WTC11 (cell line): ENCODE measurements at regions of chr1 and their contacts with region 1.

Region 1: DNA sequence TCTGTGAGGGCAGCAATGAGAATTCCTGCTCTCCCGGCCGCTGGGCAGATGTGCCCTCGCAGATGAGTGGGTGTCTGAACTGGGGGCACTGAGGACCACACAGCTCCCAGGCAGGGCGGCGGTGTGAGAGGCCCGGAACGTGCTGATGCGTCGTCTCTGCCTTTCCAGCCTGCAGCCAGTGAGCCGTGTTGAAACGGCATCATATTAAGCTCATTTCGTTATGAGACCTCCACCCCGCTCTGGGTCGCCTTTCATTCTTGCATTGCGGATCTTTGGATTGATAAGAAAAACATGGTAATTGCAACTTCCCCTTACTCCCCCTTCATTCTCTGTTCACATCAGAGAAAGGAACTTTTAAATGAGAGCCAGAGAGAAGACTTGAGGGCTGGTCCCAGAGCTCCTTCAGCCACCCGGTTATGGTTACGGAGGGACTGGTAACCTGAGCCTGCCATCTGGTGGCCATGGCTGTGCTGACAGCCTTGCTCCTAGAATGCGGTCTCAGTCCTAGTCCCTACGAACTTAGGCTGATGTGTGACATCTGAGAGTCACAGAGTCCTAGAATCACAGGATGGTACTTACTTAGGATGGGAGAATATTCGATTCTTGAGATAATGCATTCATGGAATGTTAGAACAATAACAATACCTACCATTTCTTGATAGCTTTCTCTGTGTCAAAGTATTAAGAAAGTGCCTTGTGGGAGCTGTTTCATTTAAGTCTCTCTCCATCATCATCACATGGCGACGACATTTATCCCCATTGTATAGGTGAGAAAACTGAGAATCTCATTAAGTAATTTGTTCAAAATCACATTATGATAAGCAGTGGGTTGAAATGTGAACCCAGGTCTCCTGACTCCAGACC is 271.0 kb downstream of the TRABD2B start:
- DNase-seq: peak; percentile 85
- ATAC-seq: peak; percentile 80
- H3K4me3 Mint-ChIP-seq: peak overlapping the region; percentile 39
- H3K27ac Mint-ChIP-seq: no peak overlapping the region
- H3K4me1 Mint-ChIP-seq: peaks cover 15% of the 10 kb centered on the region
- H3K27me3 Mint-ChIP-seq: peaks cover 71% of the 10 kb centered on the region
- CTCF ChIP-seq: peak; percentile 74

Region 2: DNA sequence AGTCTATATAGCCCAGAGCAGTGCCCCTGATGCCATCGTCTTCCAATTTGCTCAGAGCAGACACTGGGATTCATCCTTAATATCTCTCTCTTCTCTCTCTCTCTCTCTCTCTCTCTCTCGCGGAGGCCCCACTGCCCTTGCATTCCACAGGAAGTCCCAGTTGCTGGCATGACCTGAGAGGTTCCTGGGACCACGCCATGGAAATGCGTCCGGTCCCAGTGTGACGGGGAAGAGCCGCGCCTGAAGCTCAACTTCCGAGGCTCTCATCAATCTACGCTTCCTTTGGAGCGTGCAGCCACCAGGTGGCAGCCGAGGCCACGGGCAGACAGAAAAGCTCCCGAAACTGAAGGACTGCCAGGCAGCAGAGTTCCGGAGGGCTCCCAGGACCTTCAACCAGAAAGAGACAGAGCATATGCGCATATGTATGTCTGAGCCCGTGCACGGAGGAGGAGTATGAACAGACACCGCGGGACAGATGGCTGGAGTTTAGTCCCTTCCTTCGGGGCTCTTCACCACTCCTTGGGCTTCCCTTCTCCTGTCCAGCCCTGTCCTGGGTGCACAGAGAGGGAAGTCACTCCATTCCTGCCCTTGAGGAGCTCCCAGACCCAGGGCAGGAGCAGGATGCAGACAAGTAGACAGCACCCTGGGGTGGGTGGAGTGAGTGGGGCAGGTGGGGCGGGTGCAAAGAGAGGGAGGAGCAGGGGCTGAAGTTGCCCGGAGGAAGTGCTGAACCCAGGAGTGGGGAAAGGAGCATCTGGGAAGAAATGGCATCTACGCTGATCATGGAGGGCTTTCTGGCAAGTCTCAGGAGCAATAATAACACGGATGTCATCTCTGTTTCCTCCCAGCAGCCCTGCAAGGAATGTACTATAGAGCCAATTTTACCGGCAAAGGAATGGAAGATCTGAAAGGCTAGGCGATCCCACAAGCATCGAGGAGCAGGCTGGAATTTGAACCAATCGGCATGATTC is 546.9 kb before region 1 on chr1:
- CTCF ChIA-PET with region 1: interaction called, 10 read pairs
- POLR2A ChIA-PET with region 1: no interaction called
- DNase-seq: peak; percentile 94
- ATAC-seq: peak; percentile 81
- H3K4me3 Mint-ChIP-seq: peak overlapping the region; percentile 79
- H3K27ac Mint-ChIP-seq: peak overlapping the region; percentile 76
- H3K4me1 Mint-ChIP-seq: peaks cover 22% of the 10 kb centered on the region
- H3K27me3 Mint-ChIP-seq: peaks cover 36% of the 10 kb centered on the region
- CTCF ChIP-seq: peak; percentile 62

Region 3: GRCh38 chr1:47432071-47433036 is 293.9 kb before region 1 on chr1:
- CTCF ChIA-PET with region 1: interaction called, 133 read pairs
- POLR2A ChIA-PET with region 1: no interaction called
- DNase-seq: peak; percentile 90
- ATAC-seq: peak; percentile 70
- H3K4me3 Mint-ChIP-seq: peak overlapping the region; percentile 62
- H3K27ac Mint-ChIP-seq: no peak overlapping the region
- H3K4me1 Mint-ChIP-seq: peaks cover 45% of the 10 kb centered on the region
- H3K27me3 Mint-ChIP-seq: peaks cover 97% of the 10 kb centered on the region
- CTCF ChIP-seq: peak; percentile 73

Region 4: GRCh38 chr1:47478090-47478489 is 248.1 kb before region 1 on chr1:
- CTCF ChIA-PET with region 1: interaction called, 11 read pairs
- POLR2A ChIA-PET with region 1: no interaction called
- DNase-seq: no peak
- ATAC-seq: no peak
- H3K4me3 Mint-ChIP-seq: no peak overlapping the region
- H3K27ac Mint-ChIP-seq: 0 out of 2 replicates have a peak overlapping the region, but pooled peaks have one; percentile 27
- H3K4me1 Mint-ChIP-seq: peaks cover 12% of the 10 kb centered on the region
- H3K27me3 Mint-ChIP-seq: peaks cover 19% of the 10 kb centered on the region
- CTCF ChIP-seq: no peak

Region 5: DNA sequence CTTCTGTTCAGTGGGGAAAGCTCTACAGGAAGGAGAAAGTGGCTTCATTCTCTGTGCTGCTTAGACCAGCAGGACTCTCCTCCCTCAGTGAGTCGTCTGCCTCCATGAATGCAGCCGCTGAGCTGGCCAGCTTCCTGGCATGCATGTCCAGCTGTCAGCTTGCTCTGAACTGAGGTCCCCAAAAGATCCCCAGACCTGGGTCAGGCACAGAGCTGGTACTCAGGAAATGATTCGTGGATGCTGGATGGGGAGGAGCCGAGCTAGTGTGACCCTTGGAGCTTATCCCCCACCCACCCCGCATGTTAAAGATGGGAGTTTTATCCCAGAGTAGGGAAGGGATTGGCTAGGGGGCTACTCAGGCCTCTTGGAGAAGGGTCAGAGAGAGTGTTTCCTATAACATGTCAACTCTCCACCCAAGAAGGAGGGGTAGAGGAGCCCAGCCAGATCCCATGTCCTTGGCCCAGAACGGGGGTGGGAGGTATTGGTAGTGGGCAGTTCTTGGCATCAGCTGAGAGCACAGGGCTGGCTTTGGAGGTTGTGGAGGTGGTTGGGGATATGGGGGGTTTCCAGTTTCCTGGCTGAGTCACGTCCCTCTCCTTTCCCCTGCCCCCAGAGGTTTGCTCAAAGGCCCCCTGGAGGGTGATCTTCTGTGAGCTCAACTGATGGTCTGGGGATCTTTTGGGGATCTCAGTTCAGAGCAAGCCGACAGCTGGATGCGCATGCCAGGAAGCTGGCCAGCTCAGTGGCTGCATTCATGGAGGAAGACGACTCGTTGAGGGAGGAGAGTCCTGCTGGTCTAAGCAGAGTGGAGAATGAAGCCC is 178.3 kb before region 1 on chr1:
- CTCF ChIA-PET with region 1: interaction called, 14 read pairs
- POLR2A ChIA-PET with region 1: no interaction called
- DNase-seq: no peak
- ATAC-seq: peak; percentile 60
- H3K4me3 Mint-ChIP-seq: no peak overlapping the region
- H3K27ac Mint-ChIP-seq: no peak overlapping the region; the same call in 1 of the 2 replicates
- H3K4me1 Mint-ChIP-seq: peaks cover 28% of the 10 kb centered on the region
- H3K27me3 Mint-ChIP-seq: peaks cover 14% of the 10 kb centered on the region
- CTCF ChIP-seq: no peak

Region 6: GRCh38 chr1:47703981-47704596 is 22.1 kb before region 1 on chr1:
- CTCF ChIA-PET with region 1: interaction called, 62 read pairs
- POLR2A ChIA-PET with region 1: interaction called, 3 read pairs
- DNase-seq: no peak
- ATAC-seq: no peak
- H3K4me3 Mint-ChIP-seq: no peak overlapping the region
- H3K27ac Mint-ChIP-seq: no peak overlapping the region
- H3K4me1 Mint-ChIP-seq: peaks cover 4% of the 10 kb centered on the region
- H3K27me3 Mint-ChIP-seq: peaks cover 48% of the 10 kb centered on the region
- CTCF ChIP-seq: no peak

Region 7: GRCh38 chr1:47755101-47755990 is 29.1 kb after region 1 on chr1:
- CTCF ChIA-PET with region 1: interaction called, 43 read pairs
- POLR2A ChIA-PET with region 1: interaction called, 3 read pairs
- DNase-seq: peak; percentile 87
- ATAC-seq: peak; percentile 78
- H3K4me3 Mint-ChIP-seq: no peak overlapping the region
- H3K27ac Mint-ChIP-seq: no peak overlapping the region
- H3K4me1 Mint-ChIP-seq: peaks cover 14% of the 10 kb centered on the region
- H3K27me3 Mint-ChIP-seq: peaks cover 33% of the 10 kb centered on the region
- CTCF ChIP-seq: peak; percentile 78